ENCODE measurements at regions of chr1 and their contacts with region 1.

Region 1: GRCh38 chr1:209723756-209724693 is 19.4 kb downstream of the HSD11B1 start:
- DNase-seq: peak; percentile 72
- ATAC-seq: peak; percentile 88
- H3K4me3 Mint-ChIP-seq: peak overlapping the region; percentile 29
- H3K27ac Mint-ChIP-seq: peak overlapping the region; percentile 94
- H3K4me1 Mint-ChIP-seq: peaks cover 58% of the 10 kb centered on the region
- H3K27me3 Mint-ChIP-seq: no peaks in the 10 kb centered on the region

Region 2: GRCh38 chr1:209710093-209710492 is 13.9 kb before region 1 on chr1:
- CTCF ChIA-PET with region 1: interaction called, 5 read pairs
- POLR2A ChIA-PET with region 1: no interaction called
- intact Hi-C with region 1: loop called in 1 of 2 experiments (anchors 1 kb)
- DNase-seq: peak; percentile 26
- ATAC-seq: peak; percentile 74
- H3K4me3 Mint-ChIP-seq: peak overlapping the region; percentile 49
- H3K27ac Mint-ChIP-seq: peak overlapping the region; percentile 76
- H3K4me1 Mint-ChIP-seq: peaks cover 40% of the 10 kb centered on the region
- H3K27me3 Mint-ChIP-seq: no peaks in the 10 kb centered on the region

Region 3: GRCh38 chr1:209736490-209737117 is 12.6 kb after region 1 on chr1:
- CTCF ChIA-PET with region 1: interaction called, 23 read pairs
- POLR2A ChIA-PET with region 1: interaction called, 11 read pairs
- intact Hi-C with region 1: no loop called
- DNase-seq: no peak
- ATAC-seq: peak; percentile 79
- H3K4me3 Mint-ChIP-seq: no peak overlapping the region
- H3K27ac Mint-ChIP-seq: peak overlapping the region; percentile 12
- H3K4me1 Mint-ChIP-seq: peaks cover 46% of the 10 kb centered on the region
- H3K27me3 Mint-ChIP-seq: no peaks in the 10 kb centered on the region